MCF 10A (cell line): ENCODE measurements at regions of chr11 and their contacts with region 1.

Region 1: GRCh38 chr11:5476184-5476819 is 12.2 kb upstream of the OR52D1 start:
- DNase-seq: peak; percentile 64
- H3K4me3 Mint-ChIP-seq: no peak overlapping the region
- H3K27ac Mint-ChIP-seq: no peak overlapping the region
- H3K4me1 Mint-ChIP-seq: no peaks in the 10 kb centered on the region
- H3K27me3 Mint-ChIP-seq: peaks cover 43% of the 10 kb centered on the region
- CTCF ChIP-seq: peak; percentile 74

Region 2: DNA sequence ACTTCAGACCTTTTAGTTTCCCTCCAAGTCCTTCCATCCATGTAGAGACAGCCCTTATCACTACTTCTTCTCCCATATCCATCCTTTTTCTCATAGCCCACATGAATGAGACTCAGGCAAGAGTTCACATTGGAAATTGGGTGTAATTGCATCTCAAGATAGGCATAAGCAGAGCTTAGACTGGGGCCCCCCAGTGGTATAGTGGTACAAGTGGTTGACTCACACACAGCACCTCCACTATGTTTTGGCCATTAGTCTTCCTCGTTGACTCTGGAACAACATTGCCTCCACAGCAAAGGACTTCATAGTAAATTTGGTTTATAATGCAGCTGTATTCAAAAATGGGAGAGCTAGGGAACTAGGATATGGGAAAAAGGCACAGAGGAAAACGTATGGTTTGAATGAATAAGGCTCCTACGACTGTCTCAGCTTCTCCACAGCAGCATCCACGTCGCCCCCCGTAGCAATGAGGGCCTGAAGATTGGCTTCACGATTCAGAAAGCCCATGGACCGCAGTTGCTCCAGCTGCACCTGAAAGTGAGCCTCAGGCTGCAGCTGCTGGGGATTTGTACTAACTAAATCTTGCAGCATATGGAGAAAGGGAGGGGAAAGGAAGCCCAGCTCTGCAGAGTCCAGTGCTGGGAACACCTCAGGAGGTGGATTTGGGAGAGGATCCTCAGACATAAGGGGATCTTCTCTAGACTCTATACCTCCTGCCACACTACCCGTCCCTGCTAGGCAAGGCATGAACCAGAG is 31.1 kb after region 1 on chr11:
- CTCF ChIA-PET with region 1: interaction called, 10 read pairs
- POLR2A ChIA-PET with region 1: interaction called, 4 read pairs
- intact Hi-C with region 1: no loop called
- DNase-seq: no peak
- H3K4me3 Mint-ChIP-seq: no peak overlapping the region
- H3K27ac Mint-ChIP-seq: no peak overlapping the region
- H3K4me1 Mint-ChIP-seq: no peaks in the 10 kb centered on the region
- H3K27me3 Mint-ChIP-seq: peaks cover 26% of the 10 kb centered on the region
- CTCF ChIP-seq: no peak

Region 3: DNA sequence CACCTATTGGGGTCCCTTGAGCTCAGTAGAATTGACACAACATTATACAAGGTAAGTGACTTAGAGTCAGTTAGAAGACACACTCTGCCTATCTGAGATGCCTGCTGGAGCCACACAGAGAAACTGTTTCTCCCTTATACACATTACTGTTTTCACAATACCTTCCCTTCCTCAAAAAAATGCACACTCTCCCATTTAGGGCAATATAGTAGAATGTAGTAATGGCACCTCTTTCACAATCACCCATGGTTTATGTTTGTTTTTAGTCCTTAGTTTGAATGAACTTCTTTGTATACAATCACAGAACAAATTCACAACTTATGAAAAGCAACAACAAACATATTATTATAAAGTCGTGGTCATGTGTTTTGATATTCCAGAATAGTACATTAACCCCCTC is 57.7 kb after region 1 on chr11:
- CTCF ChIA-PET with region 1: no interaction called
- POLR2A ChIA-PET with region 1: no interaction called
- intact Hi-C with region 1: no loop called
- DNase-seq: no peak
- H3K4me3 Mint-ChIP-seq: no peak overlapping the region
- H3K27ac Mint-ChIP-seq: no peak overlapping the region
- H3K4me1 Mint-ChIP-seq: peaks cover 6% of the 10 kb centered on the region
- H3K27me3 Mint-ChIP-seq: peaks cover 24% of the 10 kb centered on the region
- CTCF ChIP-seq: no peak

Region 4: DNA sequence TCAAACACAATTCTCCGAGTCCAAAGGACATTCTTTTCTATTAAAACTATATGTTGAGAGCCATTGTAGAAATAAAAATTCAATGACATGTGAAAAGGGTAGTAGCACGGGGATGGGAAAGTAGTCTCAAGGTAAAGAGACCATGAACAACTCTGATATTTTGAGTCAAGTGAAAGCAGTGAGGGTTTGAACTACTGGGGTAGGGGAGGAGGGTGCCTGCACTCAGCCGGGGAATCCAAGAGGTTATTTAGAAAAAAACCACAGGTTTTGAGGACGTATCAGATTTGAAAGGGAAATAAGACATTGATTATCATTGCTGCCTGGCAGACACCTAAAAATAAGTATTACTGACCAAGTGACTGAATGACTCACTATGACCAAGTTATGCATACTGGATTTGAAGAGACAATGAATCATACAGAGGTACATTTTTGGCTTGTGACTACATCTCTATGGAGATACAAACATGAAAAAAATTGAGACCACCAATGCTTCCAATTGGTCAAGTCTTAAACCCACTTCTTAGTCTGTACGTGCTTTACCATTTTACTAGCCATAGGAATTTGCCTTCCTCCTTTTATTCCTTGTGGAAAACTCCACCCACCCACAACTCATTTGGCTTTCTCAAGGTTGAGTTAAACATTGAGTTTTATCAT is 74.3 kb after region 1 on chr11:
- CTCF ChIA-PET with region 1: interaction called, 7 read pairs
- POLR2A ChIA-PET with region 1: no interaction called
- intact Hi-C with region 1: loop called (anchors 1 kb)
- DNase-seq: peak; percentile 11
- H3K4me3 Mint-ChIP-seq: no peak overlapping the region
- H3K27ac Mint-ChIP-seq: no peak overlapping the region
- H3K4me1 Mint-ChIP-seq: peaks cover 13% of the 10 kb centered on the region
- H3K27me3 Mint-ChIP-seq: peaks cover 19% of the 10 kb centered on the region
- CTCF ChIP-seq: no peak

Region 5: GRCh38 chr11:5643585-5643984 is 167.3 kb after region 1 on chr11:
- CTCF ChIA-PET with region 1: no interaction called
- POLR2A ChIA-PET with region 1: no interaction called
- intact Hi-C with region 1: no loop called
- DNase-seq: no peak
- H3K4me3 Mint-ChIP-seq: no peak overlapping the region
- H3K27ac Mint-ChIP-seq: no peak overlapping the region
- H3K4me1 Mint-ChIP-seq: no peaks in the 10 kb centered on the region
- H3K27me3 Mint-ChIP-seq: no peaks in the 10 kb centered on the region
- CTCF ChIP-seq: no peak

Region 6: DNA sequence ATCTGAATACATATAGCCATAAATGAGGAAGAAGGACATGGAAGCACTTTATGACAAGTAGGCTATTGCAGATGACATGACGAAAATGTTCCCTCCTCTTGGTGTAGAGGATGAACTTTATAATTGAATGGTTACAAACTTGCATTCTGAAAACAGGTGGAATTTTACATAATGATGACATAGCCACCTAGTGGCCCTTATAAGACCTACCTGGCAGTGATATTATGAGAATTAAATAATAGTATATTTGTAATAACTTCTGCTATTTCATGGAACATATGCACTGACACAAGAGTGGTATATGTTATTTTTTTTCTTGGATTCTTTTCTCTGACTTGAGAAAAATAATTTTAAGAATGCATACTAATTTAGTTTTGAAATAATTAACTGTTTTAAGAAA is 236.2 kb after region 1 on chr11:
- CTCF ChIA-PET with region 1: interaction called, 12 read pairs
- POLR2A ChIA-PET with region 1: no interaction called
- intact Hi-C with region 1: loop called (anchors 1 kb)
- DNase-seq: peak; percentile 24
- H3K4me3 Mint-ChIP-seq: no peak overlapping the region
- H3K27ac Mint-ChIP-seq: no peak overlapping the region
- H3K4me1 Mint-ChIP-seq: no peaks in the 10 kb centered on the region
- H3K27me3 Mint-ChIP-seq: no peaks in the 10 kb centered on the region
- CTCF ChIP-seq: peak; percentile 37

Region 7: GRCh38 chr11:5891216-5891800 is 415.0 kb after region 1 on chr11:
- CTCF ChIA-PET with region 1: interaction called, 3 read pairs
- POLR2A ChIA-PET with region 1: no interaction called
- intact Hi-C with region 1: loop called (anchors 1 kb)
- DNase-seq: peak; percentile 13
- H3K4me3 Mint-ChIP-seq: no peak overlapping the region
- H3K27ac Mint-ChIP-seq: no peak overlapping the region
- H3K4me1 Mint-ChIP-seq: no peaks in the 10 kb centered on the region
- H3K27me3 Mint-ChIP-seq: peaks cover 59% of the 10 kb centered on the region
- CTCF ChIP-seq: peak; percentile 34